Cardiac septum (tissue), 1 donor: ENCODE measurements at regions of chr7 and their contacts with region 1.

Region 1: GRCh38 chr7:7103343-7104313 is 78.7 kb upstream of the C1GALT1 start:
- DNase-seq: no peak

Region 2: DNA sequence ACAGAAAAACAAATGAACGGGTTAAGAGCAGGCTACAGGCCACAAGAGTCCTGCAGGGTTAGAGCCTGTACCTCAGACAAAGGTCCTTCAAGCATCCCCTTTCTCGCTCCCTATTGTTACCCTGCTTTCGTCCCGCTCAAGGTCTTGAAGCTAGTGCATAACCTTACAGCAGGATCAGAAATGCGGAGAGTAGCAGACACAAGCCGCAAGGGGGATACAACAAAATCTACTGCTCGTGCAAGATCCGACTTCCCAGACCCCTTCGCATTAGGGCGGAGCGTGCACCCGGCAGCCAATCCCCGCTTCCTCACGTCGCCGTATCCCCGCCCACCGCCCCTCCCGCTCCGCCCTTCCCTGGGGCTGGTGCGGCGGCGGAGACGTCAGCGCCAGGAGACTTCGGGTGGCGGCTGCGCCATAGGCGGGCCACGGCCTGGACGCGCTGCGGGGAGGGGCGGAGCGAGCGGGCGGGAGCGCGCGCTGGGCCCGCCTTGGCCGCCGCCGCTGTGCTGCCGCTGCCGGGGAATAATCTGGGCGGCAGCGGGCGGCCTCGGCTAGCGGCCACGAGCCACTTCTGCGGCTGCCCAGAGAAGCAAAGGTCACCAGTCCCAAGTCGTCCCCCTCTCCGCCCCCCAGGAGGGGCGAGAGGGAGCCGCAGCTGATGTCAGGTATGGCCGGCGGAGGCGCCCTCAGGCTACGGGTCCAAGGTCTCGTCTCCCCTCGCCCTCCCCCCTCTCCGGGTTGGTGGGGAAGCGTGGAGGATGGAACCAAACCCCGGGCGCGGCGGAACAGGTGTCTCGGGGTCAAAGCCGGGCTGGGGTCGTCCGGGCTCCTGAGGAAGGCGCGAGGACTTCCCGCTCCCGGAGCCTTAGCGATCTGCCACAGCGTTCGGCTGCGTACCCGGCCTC is 78.8 kb after region 1 on chr7 and contains the start of gene C1GALT1:
- intact Hi-C with region 1: loop called (anchors 5 kb)
- DNase-seq: peak; percentile 99
- total RNA-seq, gene C1GALT1: 20.6 TPM

Region 3: DNA sequence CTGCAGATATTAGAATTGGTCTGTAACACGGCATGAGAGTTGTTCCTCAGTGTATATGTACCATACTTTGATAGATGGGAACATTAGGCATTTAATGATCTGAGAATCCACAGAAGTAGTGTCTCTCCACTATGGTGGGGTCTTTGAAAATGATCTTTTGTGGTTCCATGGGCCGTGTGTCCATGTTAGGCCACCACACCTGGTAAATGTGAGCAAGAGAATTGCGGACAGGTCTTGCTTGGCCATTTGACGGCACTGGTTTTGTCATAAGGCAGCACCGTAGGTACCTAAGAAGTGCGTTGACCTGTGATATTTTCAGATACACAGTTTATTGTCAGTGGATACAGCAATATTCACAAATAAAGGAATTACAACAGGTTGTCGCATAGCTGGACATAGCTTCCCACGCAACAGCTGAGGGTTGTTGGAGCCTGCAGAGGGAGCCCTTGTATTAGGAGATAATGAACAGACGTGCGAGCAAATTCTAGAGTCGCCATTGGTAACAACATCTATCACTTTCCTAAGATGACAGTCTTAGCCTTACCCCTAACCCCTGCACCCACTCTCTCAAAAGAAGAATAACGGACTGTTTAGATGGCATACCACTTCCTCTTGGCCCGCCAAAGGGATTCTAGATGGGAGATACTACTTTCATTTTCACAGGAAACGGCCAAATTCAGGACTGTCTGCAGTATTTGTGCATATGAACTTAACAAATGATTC is 320.7 kb after region 1 on chr7:
- intact Hi-C with region 1: loop called (anchors 10 kb)
- DNase-seq: no peak

Region 4: DNA sequence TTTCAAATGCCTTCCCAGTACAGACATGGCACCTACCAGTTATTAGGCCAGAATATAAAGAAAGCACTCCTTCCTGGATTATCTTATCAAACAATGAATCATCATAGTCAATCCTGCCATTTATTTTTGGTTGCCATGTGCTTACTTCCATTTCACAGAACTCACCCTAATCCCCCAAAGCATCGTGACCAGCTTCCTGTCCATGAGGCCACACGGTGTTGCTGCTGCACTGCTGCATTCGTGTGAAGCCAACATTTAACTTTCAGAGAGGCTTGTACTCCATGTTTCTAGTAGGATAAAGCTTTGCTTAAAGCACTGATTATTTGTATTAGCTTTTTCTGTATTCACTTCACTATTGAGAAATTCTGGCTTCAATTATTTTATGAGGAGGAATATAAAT is 417.6 kb after region 1 on chr7:
- intact Hi-C with region 1: no loop called
- DNase-seq: no peak

Region 5: DNA sequence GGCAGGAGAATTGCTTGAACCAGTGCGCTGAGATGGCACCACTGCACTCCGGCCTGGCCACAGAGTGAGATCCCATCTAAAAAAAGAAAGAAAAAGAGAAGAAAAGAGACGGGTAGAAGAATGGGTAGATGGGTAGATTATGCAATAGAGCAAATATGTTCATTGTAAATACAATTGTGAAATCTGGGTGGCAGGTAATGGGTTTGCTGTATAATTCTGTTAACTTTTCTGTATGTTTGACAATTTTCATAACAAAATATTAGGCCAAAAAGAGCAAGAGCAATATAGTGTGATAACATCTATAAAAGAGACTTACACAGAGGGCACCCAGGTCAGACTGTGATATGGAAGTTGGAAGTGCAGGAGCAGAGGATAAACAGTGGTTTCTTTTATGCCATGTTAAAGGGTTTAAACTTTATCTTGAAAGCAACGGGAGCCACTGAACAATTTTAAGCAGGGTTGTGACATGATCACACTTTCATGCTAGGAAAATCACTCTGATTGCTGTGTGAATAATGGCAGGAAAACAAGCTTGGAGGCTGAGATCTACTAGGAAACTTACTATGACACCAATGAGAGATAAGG is 438.7 kb after region 1 on chr7:
- intact Hi-C with region 1: loop called (anchors 2 kb)
- DNase-seq: no peak

Region 6: GRCh38 chr7:7761340-7761980 is 657.8 kb after region 1 on chr7:
- intact Hi-C with region 1: no loop called
- DNase-seq: no peak